ENCODE measurements at regions of chr5 and their contacts with region 1.

Region 1: DNA sequence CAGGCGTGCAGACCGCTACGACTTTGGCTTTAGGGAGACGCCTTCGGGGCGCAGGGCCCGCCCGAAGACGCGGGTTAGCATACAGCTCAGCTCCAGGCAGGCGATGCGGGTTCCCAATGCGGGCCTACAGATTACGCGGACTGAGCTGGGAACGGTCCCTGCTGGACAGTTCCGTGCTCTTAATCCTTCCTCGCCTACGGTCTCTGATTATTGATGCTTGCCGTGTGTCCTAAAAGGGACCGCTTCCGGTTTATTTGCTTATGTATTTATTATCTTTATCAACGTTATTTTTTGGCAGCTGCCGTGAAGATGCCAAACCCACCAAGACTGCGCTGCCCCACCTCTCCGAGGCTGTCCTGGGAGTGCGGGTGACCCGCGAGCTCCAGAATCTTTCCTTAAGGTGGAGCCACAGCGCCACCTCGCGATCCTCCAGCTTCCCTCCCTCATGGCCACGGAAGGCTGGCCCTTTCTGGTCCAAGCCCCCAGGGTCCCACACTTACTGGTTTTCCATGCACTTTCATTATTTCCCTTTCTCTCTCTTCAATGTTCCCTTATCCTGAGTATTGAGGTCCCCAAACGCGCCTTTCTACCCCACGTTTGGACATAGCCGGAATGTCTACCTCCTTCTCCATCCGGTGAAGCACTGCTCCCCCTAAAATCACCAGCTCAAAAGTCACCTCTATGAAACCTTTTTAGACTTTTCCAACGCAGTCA is 7.0 kb upstream of the EBF1 start:
- DNase-seq: peak; percentile 52
- ATAC-seq: peak; percentile 95
- H3K4me3 ChIP-seq: no peak overlapping the region
- H3K27ac ChIP-seq: no peak overlapping the region
- H3K4me1 ChIP-seq: no peaks in the 10 kb centered on the region
- H3K27me3 ChIP-seq: peaks cover 49% of the 10 kb centered on the region
- CTCF ChIP-seq: peak; percentile 90
- POLR2A ChIP-seq: peak; percentile 53
- RAD21 ChIP-seq: peak; percentile 94

Region 2: DNA sequence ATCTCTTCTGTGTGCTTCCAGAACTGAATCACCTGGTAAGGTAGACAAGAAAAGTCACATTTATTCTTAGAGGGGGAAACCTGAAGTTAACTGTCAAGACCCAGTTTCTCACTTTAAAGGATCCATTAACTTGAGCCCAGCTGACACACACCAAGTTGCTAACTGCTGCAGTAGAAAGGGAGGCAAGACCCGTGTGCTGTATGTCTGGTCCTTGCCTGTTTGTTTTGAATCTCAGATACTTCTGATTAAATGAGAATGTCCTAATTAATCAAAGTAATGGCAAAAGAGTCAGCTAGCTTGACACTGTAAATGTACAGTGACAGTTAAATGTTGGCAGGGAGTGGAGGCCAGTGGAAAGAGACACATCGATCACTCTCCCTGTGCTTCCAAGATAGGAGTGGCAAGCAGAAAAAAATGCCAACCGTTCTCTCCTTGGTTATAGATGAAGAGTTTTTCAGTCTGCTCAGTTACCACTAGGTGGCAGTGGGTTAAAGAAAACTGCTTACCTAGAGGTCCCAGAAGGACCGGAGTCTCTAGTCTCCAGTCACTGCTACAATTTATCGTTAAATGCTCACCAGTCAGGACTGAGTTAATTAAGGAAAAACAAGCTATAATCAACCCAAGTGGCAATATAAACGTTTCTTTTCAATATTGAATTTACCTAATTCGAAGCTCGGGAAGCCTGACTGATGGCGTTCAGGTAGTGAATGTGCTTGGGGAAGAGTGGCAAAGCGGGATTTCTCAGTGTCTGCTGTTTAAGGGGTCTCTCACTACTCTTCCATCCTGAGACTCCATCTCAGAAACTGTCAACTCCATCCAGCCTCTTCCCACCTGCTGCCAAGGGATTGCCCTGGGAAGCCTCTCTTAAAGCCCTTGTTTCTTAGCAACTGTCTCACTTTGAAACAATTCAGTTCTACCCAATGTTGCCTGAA is 1344.8 kb before region 1 on chr5:
- CTCF ChIA-PET with region 1: no interaction called
- POLR2A ChIA-PET with region 1: no interaction called
- dilution Hi-C with region 1: no loop called
- in situ Hi-C with region 1: no loop called
- intact Hi-C with region 1: loop called (anchors 1 kb)
- DNase-seq: peak; percentile 72
- ATAC-seq: peak; percentile 99
- H3K4me3 ChIP-seq: no peak overlapping the region
- H3K27ac ChIP-seq: no peak overlapping the region
- H3K4me1 ChIP-seq: no peaks in the 10 kb centered on the region
- H3K27me3 ChIP-seq: no peaks in the 10 kb centered on the region
- CTCF ChIP-seq: peak; percentile 81
- POLR2A ChIP-seq: no peak
- RAD21 ChIP-seq: peak; percentile 73

Region 3: GRCh38 chr5:158174918-158175851 is 931.5 kb before region 1 on chr5:
- CTCF ChIA-PET with region 1: interaction called, 17 read pairs
- POLR2A ChIA-PET with region 1: no interaction called
- dilution Hi-C with region 1: no loop called
- in situ Hi-C with region 1: loop called (anchors 5 kb)
- intact Hi-C with region 1: loop called (anchors 1 kb)
- DNase-seq: peak; percentile 56
- ATAC-seq: peak; percentile 77
- H3K4me3 ChIP-seq: no peak overlapping the region
- H3K27ac ChIP-seq: no peak overlapping the region
- H3K4me1 ChIP-seq: no peaks in the 10 kb centered on the region
- H3K27me3 ChIP-seq: no peaks in the 10 kb centered on the region; the same call in none of the 2 replicates
- CTCF ChIP-seq: peak; percentile 86
- POLR2A ChIP-seq: 0 out of 2 replicates have a peak, but pooled peaks have one; percentile 28
- RAD21 ChIP-seq: peak; percentile 94

Region 4: DNA sequence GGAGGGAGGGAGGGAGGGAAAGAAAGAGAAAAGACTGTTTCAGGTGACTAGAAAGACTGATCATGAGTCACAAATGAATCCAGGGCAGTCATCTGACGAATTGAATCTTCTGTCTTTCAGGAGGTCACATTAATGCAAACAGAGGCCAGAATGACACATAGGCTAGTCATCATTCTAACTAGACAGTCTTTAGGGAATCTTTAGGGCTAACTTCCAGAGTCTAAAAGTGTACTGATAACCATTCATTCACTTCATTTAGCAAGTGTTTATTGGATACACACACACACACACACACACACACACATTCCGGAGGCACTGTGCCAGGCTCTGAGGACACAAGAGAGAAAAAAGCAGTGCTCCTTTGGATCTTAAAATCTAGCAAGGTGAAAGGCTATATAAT is 163.7 kb before region 1 on chr5:
- CTCF ChIA-PET with region 1: no interaction called
- POLR2A ChIA-PET with region 1: no interaction called
- dilution Hi-C with region 1: no loop called
- in situ Hi-C with region 1: no loop called
- intact Hi-C with region 1: loop called (anchors 10 kb)
- DNase-seq: peak; percentile 91
- ATAC-seq: peak; percentile 88
- H3K4me3 ChIP-seq: no peak overlapping the region
- H3K27ac ChIP-seq: no peak overlapping the region
- H3K4me1 ChIP-seq: 0 out of 2 replicates have a peak, but pooled peaks cover 4% of the 10 kb centered on the region
- H3K27me3 ChIP-seq: no peaks in the 10 kb centered on the region
- CTCF ChIP-seq: no peak
- POLR2A ChIP-seq: no peak
- RAD21 ChIP-seq: no peak

Region 5: GRCh38 chr5:159133041-159133741 is 26.5 kb after region 1 on chr5:
- CTCF ChIA-PET with region 1: interaction called, 6 read pairs
- POLR2A ChIA-PET with region 1: no interaction called
- dilution Hi-C with region 1: no loop called
- in situ Hi-C with region 1: no loop called
- intact Hi-C with region 1: loop called (anchors 1 kb)
- DNase-seq: peak; percentile 67
- ATAC-seq: peak; percentile 78
- H3K4me3 ChIP-seq: no peak overlapping the region
- H3K27ac ChIP-seq: no peak overlapping the region
- H3K4me1 ChIP-seq: peaks cover 2% of the 10 kb centered on the region
- H3K27me3 ChIP-seq: peaks cover 10% of the 10 kb centered on the region
- CTCF ChIP-seq: peak; percentile 90
- POLR2A ChIP-seq: no peak
- RAD21 ChIP-seq: peak; percentile 86

Region 6: DNA sequence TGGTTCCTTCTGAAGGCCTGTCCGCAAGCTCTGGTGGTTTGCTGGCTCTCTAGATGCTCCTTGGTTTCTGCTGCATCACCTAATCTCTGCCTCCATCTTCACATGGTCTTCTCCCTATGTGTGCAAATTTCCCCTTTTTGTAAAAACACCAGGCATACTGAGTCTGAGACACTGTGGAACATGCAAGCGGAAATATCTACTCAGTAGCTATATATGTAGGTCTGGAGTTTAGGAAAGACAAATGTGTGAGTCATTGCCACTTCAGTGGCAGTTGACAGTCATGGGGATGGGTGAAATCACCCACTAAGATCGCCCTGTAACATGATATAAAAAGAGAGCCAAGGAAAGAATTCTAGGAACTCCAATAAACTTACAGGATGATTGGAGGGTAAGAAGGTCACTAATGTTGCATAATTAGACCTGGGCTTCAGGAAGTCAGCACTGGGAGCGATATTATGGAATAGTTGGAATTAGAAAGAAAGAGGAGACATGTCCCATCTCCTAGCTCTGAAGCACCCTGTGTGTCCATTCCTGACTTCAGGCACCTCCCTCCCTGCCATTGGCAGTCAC is 133.7 kb after region 1 on chr5:
- CTCF ChIA-PET with region 1: no interaction called
- POLR2A ChIA-PET with region 1: no interaction called
- dilution Hi-C with region 1: no loop called
- in situ Hi-C with region 1: no loop called
- intact Hi-C with region 1: no loop called
- DNase-seq: peak; percentile 42
- ATAC-seq: no peak
- H3K4me3 ChIP-seq: no peak overlapping the region
- H3K27ac ChIP-seq: no peak overlapping the region
- H3K4me1 ChIP-seq: peaks cover 1% of the 10 kb centered on the region; the same call in 1 of the 2 replicates
- H3K27me3 ChIP-seq: no peaks in the 10 kb centered on the region
- CTCF ChIP-seq: no peak
- POLR2A ChIP-seq: no peak
- RAD21 ChIP-seq: no peak